ENCODE measurements at regions of chr7 and their contacts with region 1.

Region 1: DNA sequence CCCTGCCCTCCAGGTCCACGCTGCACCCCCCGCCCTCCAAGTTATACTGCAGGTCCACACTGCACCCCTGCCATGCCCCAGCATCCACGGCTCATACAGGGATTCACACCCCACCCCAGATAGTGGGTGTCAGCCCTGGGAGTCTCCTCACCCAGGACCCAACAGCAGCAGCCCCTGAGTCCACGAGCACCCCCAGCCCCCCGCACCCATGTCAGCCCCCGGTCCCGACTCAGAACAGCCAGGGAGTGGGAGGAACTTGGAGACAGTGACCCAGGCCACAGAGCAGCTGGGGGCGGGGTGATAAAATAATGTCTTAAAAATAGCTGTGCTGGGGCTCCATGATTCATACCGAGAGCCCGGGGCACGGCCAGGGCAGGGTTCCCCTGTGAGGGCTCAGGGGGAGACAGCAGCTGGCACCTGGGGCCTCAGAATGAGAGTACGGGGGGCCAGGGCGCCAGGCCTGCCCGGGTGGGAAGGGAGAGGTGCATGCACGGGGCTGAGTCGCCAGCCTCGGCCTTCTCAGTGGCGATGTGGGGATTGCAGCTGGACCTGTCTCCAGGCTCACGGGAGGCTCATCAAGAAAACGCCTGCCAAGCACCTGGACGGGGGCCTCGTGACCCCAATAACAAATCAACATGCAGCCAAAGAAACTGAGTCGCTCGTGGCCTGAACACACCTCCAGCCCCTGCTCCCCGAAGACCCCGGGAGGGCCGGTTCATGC is 29.8 kb downstream of the ADAP1 start:
- DNase-seq: peak; percentile 38
- H3K4me3 ChIP-seq: no peak overlapping the region
- H3K27ac ChIP-seq: peak overlapping the region; percentile 89 to 93 (median 90)
- H3K4me1 ChIP-seq: peaks cover 44 to 87% (median 73%) of the 10 kb centered on the region in 4 donors
- H3K27me3 ChIP-seq: no peaks in the 10 kb centered on the region
- CTCF ChIP-seq: no peak
- EP300 ChIP-seq: no peak
- POLR2A ChIP-seq: peak; percentile 18

Region 2: GRCh38 chr7:1439373-1440363 is 515.0 kb after region 1 on chr7:
- in situ Hi-C with region 1: no loop called
- intact Hi-C with region 1: loop called (anchors 5 kb)
- DNase-seq: no peak
- H3K4me3 ChIP-seq: no peak overlapping the region
- H3K27ac ChIP-seq: no peak overlapping the region
- H3K4me1 ChIP-seq: no peaks in the 10 kb centered on the region
- H3K27me3 ChIP-seq: no peaks in the 10 kb centered on the region
- CTCF ChIP-seq: no peak
- EP300 ChIP-seq: no peak
- POLR2A ChIP-seq: no peak

Measured in transverse colon (tissue), 4 donors.